Ovary (tissue), 10 donors: ENCODE measurements at regions of chr2 and their contacts with region 1.

Region 1: GRCh38 chr2:69914170-69914960 is 544 bp upstream of the MXD1 start:
- DNase-seq: peak; percentile 99 to 100 (median 100)
- H3K4me3 ChIP-seq: peak overlapping the region; percentile 75
- H3K27ac ChIP-seq: peak overlapping the region; percentile 92 to 98
- H3K4me1 ChIP-seq: peaks cover 2% of the 10 kb centered on the region
- H3K27me3 ChIP-seq: no peaks in the 10 kb centered on the region
- CTCF ChIP-seq: peak; percentile 12 to 58 (median 40)
- EP300 ChIP-seq: no peak
- POLR2A ChIP-seq: peak; percentile 93

Region 2: DNA sequence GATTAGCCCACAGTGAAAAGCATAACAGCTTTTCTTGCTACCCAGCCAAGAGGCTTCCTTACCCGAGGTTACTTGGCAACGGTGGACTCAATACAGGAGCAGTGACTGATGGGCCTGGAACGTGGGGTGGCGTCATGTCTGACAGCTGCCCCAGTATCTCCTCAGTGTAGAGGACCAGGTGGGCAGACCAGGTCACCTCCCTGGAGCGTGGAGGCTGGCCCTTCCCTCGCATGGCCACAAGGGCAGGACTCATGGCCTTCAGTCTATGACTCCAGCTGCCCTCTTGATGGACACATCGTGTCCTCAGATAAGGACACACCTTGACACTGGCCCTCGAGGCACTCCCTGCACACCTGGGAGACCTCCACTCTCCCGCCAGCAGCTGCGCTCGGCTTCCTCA is 40.7 kb after region 1 on chr2:
- intact Hi-C with region 1: loop called in 1 of 4 experiments (anchors 2 kb)
- DNase-seq: no peak
- H3K4me3 ChIP-seq: no peak overlapping the region
- H3K27ac ChIP-seq: no peak overlapping the region
- H3K4me1 ChIP-seq: no peaks in the 10 kb centered on the region
- H3K27me3 ChIP-seq: no peaks in the 10 kb centered on the region
- CTCF ChIP-seq: no peak
- EP300 ChIP-seq: no peak
- POLR2A ChIP-seq: no peak

Region 3: GRCh38 chr2:70069049-70069448 is 154.7 kb after region 1 on chr2:
- intact Hi-C with region 1: loop called in 1 of 4 experiments (anchors 5 kb)
- DNase-seq: no peak
- H3K4me3 ChIP-seq: no peak overlapping the region
- H3K27ac ChIP-seq: no peak overlapping the region
- H3K4me1 ChIP-seq: peaks cover 3% of the 10 kb centered on the region
- H3K27me3 ChIP-seq: no peaks in the 10 kb centered on the region
- CTCF ChIP-seq: no peak
- EP300 ChIP-seq: no peak
- POLR2A ChIP-seq: no peak

Region 4: GRCh38 chr2:70142590-70143313 is 228.4 kb after region 1 on chr2:
- intact Hi-C with region 1: loop called (anchors 2 to 10 kb)
- DNase-seq: peak; percentile 99 to 100 (median 100)
- H3K4me3 ChIP-seq: peak overlapping the region; percentile 73
- H3K27ac ChIP-seq: peak overlapping the region; percentile 100
- H3K4me1 ChIP-seq: peaks cover 13% of the 10 kb centered on the region
- H3K27me3 ChIP-seq: no peaks in the 10 kb centered on the region
- CTCF ChIP-seq: peak; percentile 87 to 100 (median 100)
- EP300 ChIP-seq: peak; percentile 96
- POLR2A ChIP-seq: peak; percentile 93

Region 5: DNA sequence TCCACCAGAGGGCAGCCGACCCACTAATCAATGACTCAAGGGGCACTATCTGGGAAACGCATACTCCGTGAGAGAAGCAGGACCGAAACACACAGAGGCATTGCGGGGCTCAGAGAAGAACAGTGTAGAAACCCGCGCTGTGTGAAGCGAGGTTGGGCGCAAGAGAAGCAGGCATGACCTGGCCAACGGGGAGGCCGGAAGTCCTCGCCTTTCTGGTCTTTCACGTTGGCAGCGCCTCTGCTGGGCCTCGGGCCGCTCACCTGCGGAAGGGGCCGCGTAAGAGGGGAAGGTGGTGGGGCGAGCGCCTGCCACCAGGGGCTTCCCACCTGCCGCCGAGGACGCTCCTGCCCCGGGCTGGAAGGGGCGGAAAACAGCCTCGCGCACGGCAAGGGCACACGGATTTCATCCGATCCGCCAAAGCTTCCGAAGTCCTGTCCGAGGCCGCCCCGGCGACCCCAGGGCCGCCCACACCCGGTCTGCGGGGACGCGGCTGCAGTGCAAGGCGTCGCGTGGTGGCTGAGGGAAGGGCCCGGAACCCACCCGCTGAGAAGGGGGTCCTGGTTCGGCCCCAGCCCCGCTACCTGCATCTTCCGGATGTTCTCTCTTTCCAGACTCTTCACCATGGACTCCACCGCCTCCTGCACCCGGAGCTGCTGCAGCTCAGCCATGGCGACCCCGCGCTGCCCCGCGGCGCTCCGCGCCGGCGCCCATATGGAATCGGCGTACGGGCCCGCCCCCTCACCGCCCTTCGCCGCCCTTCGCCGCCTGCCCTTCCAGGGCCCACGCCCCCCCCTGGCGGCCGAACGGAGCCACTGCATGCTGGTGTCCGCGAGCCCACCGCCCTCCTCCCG is 387.2 kb after region 1 on chr2 and contains the start of gene FAM136A:
- intact Hi-C with region 1: loop called in 3 of 4 experiments (anchors 5 to 10 kb)
- DNase-seq: peak; percentile 81 to 92 (median 88)
- H3K4me3 ChIP-seq: peak within 1 kb of the TSS; percentile 82
- H3K27ac ChIP-seq: peak within 1 kb of the TSS; percentile 52 to 75
- H3K4me1 ChIP-seq: peaks cover 2% of the 10 kb centered on the region
- H3K27me3 ChIP-seq: no peaks in the 10 kb centered on the region
- CTCF ChIP-seq: peak; percentile 89 to 95 (median 94)
- EP300 ChIP-seq: no peak
- POLR2A ChIP-seq: no peak
- total RNA-seq, gene FAM136A: 10.4 to 23.1 (median 17.2) TPM